Motor neuron (in vitro differentiated cells): ENCODE measurements at regions of chr12 and their contacts with region 1.

Region 1: GRCh38 chr12:120580787-120581723 is at the start of gene POP5:
- ATAC-seq: peak; percentile 89 to 98 (median 96)
- H3K4me3 ChIP-seq: peak within 1 kb of the TSS; percentile 67 to 97 (median 82)
- H3K27ac ChIP-seq: peak within 1 kb of the TSS in 1 of 2 donors; percentile 41
- H3K4me1 ChIP-seq: peaks cover 4 to 6% of the 10 kb centered on the region in 2 donors
- total RNA-seq, gene POP5: 30.5 to 74.3 (median 54.4) TPM

Region 2: DNA sequence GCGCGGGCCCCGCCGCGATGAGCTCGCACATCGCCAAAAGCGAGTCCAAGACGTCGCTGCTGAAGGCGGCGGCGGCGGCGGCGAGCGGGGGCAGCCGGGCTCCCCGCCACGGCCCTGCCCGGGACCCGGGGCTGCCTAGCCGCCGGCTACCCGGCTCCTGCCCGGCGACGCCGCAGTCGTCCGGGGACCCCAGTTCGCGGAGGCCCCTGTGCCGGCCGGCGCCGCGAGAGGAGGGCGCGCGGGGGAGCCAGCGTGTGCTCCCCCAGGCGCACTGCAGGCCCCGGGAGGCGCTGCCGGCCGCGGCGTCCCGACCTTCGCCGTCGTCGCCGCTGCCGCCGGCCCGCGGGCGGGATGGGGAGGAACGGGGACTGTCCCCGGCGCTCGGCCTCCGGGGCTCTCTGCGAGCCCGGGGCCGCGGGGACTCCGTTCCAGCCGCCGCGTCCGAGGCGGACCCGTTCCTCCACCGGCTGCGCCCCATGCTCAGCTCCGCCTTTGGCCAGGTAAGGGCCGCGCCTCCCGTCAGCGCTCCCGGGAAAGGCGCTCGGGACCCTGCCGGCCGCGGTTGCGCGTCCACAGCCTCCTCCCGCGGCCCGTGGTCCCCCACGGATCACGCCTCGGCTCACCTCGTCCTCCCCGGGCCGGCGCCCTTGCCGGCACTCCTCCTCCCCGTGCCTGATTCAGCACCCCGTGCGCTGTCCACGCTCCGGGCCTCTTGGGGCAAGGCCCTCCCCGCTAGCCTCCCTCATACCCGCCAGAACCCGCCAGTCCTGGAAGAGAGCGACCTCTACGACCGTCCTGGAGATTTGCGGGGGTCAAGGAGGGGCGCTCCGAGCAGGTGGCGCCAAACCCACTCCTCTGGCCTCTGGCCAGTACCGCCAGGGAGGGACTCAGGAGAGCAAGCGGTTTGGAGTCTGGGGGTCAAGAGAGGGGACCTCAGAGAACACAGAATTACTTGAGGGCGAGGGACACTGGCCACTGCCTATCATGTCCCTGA is 60.1 kb after region 1 on chr12:
- in situ Hi-C with region 1: loop called in 1 of 9 experiments (anchors 10 kb)
- ATAC-seq: peak; percentile 58 to 97 (median 67)
- H3K4me3 ChIP-seq: peak overlapping the region; percentile 38 to 55 (median 46)
- H3K27ac ChIP-seq: no peak overlapping the region
- H3K4me1 ChIP-seq: peaks cover 0 to 4% of the 10 kb centered on the region in 2 donors

Region 3: GRCh38 chr12:120710031-120710804 is 129.2 kb after region 1 on chr12 and contains the start of gene UNC119B:
- in situ Hi-C with region 1: loop called in 3 of 9 experiments (anchors 10 kb)
- ATAC-seq: peak; percentile 79 to 86 (median 84)
- H3K4me3 ChIP-seq: peak within 1 kb of the TSS; percentile 80 to 99 (median 90)
- H3K27ac ChIP-seq: peak within 1 kb of the TSS; percentile 80 to 82
- H3K4me1 ChIP-seq: peaks cover 14 to 21% of the 10 kb centered on the region in 2 donors
- total RNA-seq, gene UNC119B: 15.7 to 37.7 (median 20.8) TPM

Region 4: DNA sequence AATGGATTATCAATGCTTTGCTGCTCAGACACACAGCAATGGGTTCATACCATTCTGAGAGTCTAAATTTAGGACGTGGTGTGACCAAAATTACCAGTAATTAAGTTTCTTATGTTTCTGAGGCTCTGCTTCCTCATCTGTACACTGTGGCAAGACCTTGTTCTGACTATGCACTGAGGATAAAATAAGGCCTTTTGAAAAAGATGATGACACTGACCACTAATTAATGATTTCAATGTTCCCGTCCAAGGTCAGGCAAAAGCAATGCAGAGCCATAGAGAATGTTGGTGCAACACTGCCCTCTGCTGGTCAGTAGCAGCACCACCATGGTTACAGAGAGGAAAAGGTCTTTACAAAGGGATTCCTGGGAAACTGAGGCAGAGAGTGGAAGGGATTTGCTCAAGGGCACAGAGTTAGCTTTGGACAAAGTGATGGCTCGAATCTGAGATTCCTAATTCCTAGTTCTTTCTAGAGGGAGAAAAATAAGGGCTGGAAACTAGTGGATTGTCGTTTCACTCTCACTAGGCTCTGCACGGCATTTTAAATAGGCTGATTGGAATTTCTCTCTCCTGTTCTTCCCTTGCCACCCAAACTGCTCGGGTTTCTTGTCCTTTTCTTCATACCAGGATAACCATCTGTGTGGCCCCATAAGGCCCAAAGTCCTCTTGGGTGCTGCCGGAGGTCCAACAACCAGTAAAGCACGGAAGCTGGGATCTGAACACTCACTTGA is 529.3 kb after region 1 on chr12:
- in situ Hi-C with region 1: loop called in 1 of 9 experiments (anchors 25 kb)
- ATAC-seq: peak; percentile 79 to 89 (median 86)
- H3K4me3 ChIP-seq: no peak overlapping the region
- H3K27ac ChIP-seq: no peak overlapping the region
- H3K4me1 ChIP-seq: peaks cover 0 to 8% of the 10 kb centered on the region in 2 donors